SK-N-SH (cell line): ENCODE measurements at regions of chr15 and their contacts with region 1.

Region 1: GRCh38 chr15:37995461-37996347 is 61.3 kb downstream of the TMCO5A start:
- DNase-seq: peak; percentile 41
- H3K4me3 ChIP-seq: peak overlapping the region in 1 of 2 experiments; percentile 12; a peak in 1 of 4 replicates
- H3K27ac ChIP-seq: no peak overlapping the region
- H3K4me1 ChIP-seq: peaks cover 0 to 2% of the 10 kb centered on the region in 2 experiments; a peak in 1 of 4 replicates
- H3K27me3 ChIP-seq: no peaks in the 10 kb centered on the region
- CTCF ChIP-seq: peak; percentile 89
- EP300 ChIP-seq: no peak
- RAD21 ChIP-seq: peak; percentile 96

Region 2: DNA sequence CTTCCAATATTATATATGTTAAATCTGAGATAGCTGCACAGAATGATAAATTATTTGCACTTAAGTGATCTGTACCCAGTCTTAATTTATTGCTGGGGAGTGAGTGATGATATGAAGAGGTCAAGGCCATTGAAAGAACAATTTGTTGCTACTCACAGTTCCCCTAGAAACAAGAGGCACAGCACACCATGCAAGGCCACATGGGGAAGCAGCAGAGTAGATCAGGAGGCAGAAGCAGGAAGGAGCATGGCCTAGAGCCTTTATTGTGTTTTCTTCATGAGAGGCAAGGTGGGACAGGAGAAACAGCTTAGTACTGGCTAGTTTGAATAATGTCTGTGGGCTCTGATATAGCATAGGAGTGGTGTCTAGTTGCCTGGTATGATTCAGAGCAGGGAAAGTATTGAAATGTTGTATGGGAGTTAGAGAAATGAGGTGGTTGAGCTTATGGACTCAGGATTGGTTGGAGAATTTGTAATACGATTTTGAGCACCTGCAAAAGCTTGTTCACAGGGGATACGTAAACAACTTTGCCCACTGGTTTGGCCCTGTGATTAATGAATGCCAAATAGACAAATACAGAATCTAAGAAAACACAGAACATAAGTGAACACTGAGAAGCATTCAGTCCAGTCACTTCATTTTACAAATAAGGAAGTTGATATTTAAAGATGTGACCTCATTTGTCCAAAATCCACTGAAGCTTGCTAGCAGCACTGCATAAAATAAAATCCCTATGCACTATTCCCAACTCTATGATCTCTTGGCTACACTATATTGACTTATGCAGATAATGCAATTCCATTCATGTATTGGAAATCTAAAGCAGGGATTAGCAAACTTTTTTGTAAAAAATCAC is 10.5 kb after region 1 on chr15:
- CTCF ChIA-PET with region 1: interaction called, 21 read pairs
- POLR2A ChIA-PET with region 1: no interaction called
- DNase-seq: no peak
- H3K4me3 ChIP-seq: no peak overlapping the region
- H3K27ac ChIP-seq: no peak overlapping the region
- H3K4me1 ChIP-seq: no peaks in the 10 kb centered on the region
- H3K27me3 ChIP-seq: no peaks in the 10 kb centered on the region
- CTCF ChIP-seq: no peak
- EP300 ChIP-seq: no peak
- RAD21 ChIP-seq: no peak

Region 3: DNA sequence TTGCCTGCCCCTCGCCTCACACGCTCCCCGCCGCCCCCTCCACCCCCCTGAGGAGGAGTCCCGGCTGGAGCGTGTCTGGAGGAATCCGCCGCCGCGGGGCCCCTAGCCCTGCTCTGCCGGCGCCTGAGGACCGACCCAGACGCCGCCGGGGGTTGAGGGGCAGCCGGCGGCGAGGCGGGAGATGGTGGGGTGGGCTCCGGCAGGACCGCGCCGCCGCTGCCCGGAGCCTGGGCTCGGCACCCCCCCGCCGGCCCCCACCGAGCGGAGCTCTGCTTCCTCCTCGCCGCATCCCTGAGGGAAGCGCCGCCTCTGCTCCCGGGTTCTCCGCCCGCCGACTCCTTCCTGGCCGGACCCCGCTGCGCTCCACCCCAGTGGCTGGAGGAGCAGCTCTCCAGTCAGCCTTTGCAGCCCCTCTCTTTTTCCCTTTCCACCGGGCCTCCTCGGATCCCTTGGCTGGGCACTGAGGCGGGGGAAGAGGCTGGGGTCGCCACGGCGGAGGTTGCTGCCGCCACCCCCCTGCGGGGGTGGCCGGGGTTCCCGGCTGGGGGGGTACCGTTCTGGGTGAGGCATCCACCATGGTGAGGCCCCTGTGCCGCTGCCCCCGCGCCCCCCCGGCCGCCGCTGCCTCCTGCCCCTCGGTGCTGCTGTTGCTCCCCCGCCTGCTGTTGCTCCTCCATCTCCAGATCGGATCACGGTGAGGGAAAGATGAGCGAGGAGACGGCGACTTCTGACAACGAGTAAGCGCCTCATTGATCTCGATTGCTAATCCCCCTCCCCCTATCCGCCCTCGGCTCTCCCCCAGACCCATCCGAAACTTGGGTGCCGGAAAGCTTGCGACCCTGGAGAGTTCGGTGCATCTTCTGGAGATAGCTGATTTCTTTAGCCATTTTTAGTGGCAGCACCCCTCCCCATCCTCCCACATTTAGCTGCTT is 257.0 kb after region 1 on chr15 and contains the start of gene SPRED1:
- CTCF ChIA-PET with region 1: interaction called, 17 read pairs
- POLR2A ChIA-PET with region 1: interaction called, 3 read pairs
- DNase-seq: peak; percentile 76
- H3K4me3 ChIP-seq: peak within 1 kb of the TSS; percentile 91
- H3K27ac ChIP-seq: peak within 1 kb of the TSS; percentile 89 to 97
- H3K4me1 ChIP-seq: peaks cover 17 to 19% of the 10 kb centered on the region in 2 experiments; a peak in 3 of 4 replicates
- H3K27me3 ChIP-seq: no peaks in the 10 kb centered on the region
- CTCF ChIP-seq: no peak
- EP300 ChIP-seq: no peak
- RAD21 ChIP-seq: 0 out of 2 replicates have a peak, but pooled peaks have one; percentile 4
- polyA plus RNA-seq, gene SPRED1: 4.3 and 4.4 TPM in 2 replicates

Region 4: GRCh38 chr15:38378161-38378560 is 382.5 kb after region 1 on chr15:
- CTCF ChIA-PET with region 1: interaction called, 19 read pairs
- POLR2A ChIA-PET with region 1: no interaction called
- DNase-seq: no peak
- H3K4me3 ChIP-seq: no peak overlapping the region
- H3K27ac ChIP-seq: no peak overlapping the region
- H3K4me1 ChIP-seq: no peaks in the 10 kb centered on the region; a peak in 1 of 4 replicates
- H3K27me3 ChIP-seq: no peaks in the 10 kb centered on the region
- CTCF ChIP-seq: no peak
- EP300 ChIP-seq: no peak
- RAD21 ChIP-seq: no peak

Region 5: GRCh38 chr15:38414357-38414756 is 418.7 kb after region 1 on chr15:
- CTCF ChIA-PET with region 1: interaction called, 27 read pairs
- POLR2A ChIA-PET with region 1: no interaction called
- DNase-seq: peak; percentile 54
- H3K4me3 ChIP-seq: no peak overlapping the region
- H3K27ac ChIP-seq: no peak overlapping the region
- H3K4me1 ChIP-seq: no peaks in the 10 kb centered on the region
- H3K27me3 ChIP-seq: peaks cover 6% of the 10 kb centered on the region; the same call in 1 of the 2 replicates
- CTCF ChIP-seq: peak; percentile 83
- EP300 ChIP-seq: no peak
- RAD21 ChIP-seq: peak; percentile 75

Region 6: DNA sequence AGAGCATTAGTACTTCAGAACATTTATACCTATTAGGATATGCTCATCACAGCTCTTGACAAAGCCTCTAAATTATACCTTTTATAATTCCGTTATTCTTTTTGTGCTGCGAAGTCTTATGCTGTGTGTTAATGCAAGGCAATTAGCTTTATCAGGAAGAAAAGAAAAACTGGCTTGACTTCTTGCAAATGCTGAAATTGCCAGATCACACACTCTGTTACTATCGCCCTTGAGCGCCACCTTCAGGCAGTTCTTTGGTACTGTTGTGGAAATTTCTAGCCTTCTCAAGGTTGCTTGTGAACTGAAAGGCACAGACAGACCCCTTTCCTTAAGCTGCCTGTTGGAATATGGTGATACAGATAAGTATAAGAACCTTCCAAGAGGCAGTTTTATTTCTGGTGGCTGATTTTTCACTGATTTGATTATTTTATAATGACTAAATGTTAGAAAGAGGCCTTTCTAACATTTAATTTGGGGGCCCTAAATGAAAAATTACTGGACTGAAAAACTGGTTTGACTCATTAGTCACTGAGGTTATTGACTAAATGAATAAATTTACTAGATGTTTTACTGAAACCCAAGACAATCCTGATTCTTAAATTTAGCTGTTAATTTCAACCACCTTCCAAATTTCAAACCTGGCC is 695.1 kb after region 1 on chr15:
- CTCF ChIA-PET with region 1: interaction called, 10 read pairs
- POLR2A ChIA-PET with region 1: no interaction called
- DNase-seq: peak; percentile 32
- H3K4me3 ChIP-seq: no peak overlapping the region
- H3K27ac ChIP-seq: no peak overlapping the region
- H3K4me1 ChIP-seq: peaks cover 0 to 22% of the 10 kb centered on the region in 2 experiments; a peak in 2 of 4 replicates
- H3K27me3 ChIP-seq: no peaks in the 10 kb centered on the region
- CTCF ChIP-seq: peak; percentile 86
- EP300 ChIP-seq: no peak
- RAD21 ChIP-seq: peak; percentile 70